ENCODE measurements at regions of chr3 and their contacts with region 1.

Region 1: GRCh38 chr3:52536369-52537164 is at the start of gene UQCC5:
- DNase-seq: peak; percentile 98
- H3K4me3 Mint-ChIP-seq: peak within 1 kb of the TSS; percentile 100
- H3K27ac Mint-ChIP-seq: peak within 1 kb of the TSS; percentile 99
- H3K4me1 Mint-ChIP-seq: peaks cover 42% of the 10 kb centered on the region
- H3K27me3 Mint-ChIP-seq: no peaks in the 10 kb centered on the region
- total RNA-seq, gene UQCC5: 14.1 and 17.1 TPM in 2 replicates

Region 2: GRCh38 chr3:51974963-51975851 is 561.4 kb before region 1 on chr3 and contains the start of gene ABHD14A:
- intact Hi-C with region 1: loop called (anchors 10 kb)
- DNase-seq: peak; percentile 72
- H3K4me3 Mint-ChIP-seq: peak within 1 kb of the TSS; percentile 87
- H3K27ac Mint-ChIP-seq: peak within 1 kb of the TSS; percentile 90
- H3K4me1 Mint-ChIP-seq: peaks cover 24% of the 10 kb centered on the region
- H3K27me3 Mint-ChIP-seq: no peaks in the 10 kb centered on the region
- total RNA-seq, gene ABHD14A: 12.8 and 13.3 TPM in 2 replicates

Region 3: GRCh38 chr3:52278510-52279069 is 258.0 kb before region 1 on chr3 and contains the start of gene WDR82:
- intact Hi-C with region 1: loop called (anchors 1 kb)
- DNase-seq: peak; percentile 95
- H3K4me3 Mint-ChIP-seq: peak within 1 kb of the TSS; percentile 97
- H3K27ac Mint-ChIP-seq: peak within 1 kb of the TSS; percentile 99
- H3K4me1 Mint-ChIP-seq: peaks cover 70% of the 10 kb centered on the region
- H3K27me3 Mint-ChIP-seq: no peaks in the 10 kb centered on the region
- total RNA-seq, gene WDR82: 105 and 107 TPM in 2 replicates

Region 4: GRCh38 chr3:52455283-52456168 is 81.0 kb before region 1 on chr3 and contains the start of gene NISCH:
- intact Hi-C with region 1: loop called (anchors 1 kb)
- DNase-seq: peak; percentile 96
- H3K4me3 Mint-ChIP-seq: peak within 1 kb of the TSS; percentile 96
- H3K27ac Mint-ChIP-seq: peak within 1 kb of the TSS; percentile 93
- H3K4me1 Mint-ChIP-seq: peaks cover 39% of the 10 kb centered on the region
- H3K27me3 Mint-ChIP-seq: no peaks in the 10 kb centered on the region
- total RNA-seq, gene NISCH: 72.0 and 74.2 TPM in 2 replicates

Region 5: GRCh38 chr3:52552089-52552488 is 15.5 kb after region 1 on chr3:
- intact Hi-C with region 1: no loop called
- DNase-seq: no peak
- H3K4me3 Mint-ChIP-seq: no peak overlapping the region
- H3K27ac Mint-ChIP-seq: no peak overlapping the region
- H3K4me1 Mint-ChIP-seq: no peaks in the 10 kb centered on the region
- H3K27me3 Mint-ChIP-seq: no peaks in the 10 kb centered on the region

Region 6: GRCh38 chr3:52685709-52686691 is 149.4 kb after region 1 on chr3 and contains the starts of genes GNL3 and PBRM1:
- intact Hi-C with region 1: loop called (anchors 1 kb)
- DNase-seq: peak; percentile 93
- H3K4me3 Mint-ChIP-seq: peak within 1 kb of the TSS; percentile 98
- H3K27ac Mint-ChIP-seq: peak within 1 kb of the TSS; percentile 99
- H3K4me1 Mint-ChIP-seq: peaks cover 75% of the 10 kb centered on the region
- H3K27me3 Mint-ChIP-seq: no peaks in the 10 kb centered on the region
- total RNA-seq, gene GNL3: 241 and 245 TPM in 2 replicates
- total RNA-seq, gene PBRM1: 68.6 and 68.8 TPM in 2 replicates